Transverse colon (tissue), 4 donors: ENCODE measurements at regions of chr2 and their contacts with region 1.

Region 1: GRCh38 chr2:105369747-105370690 is 28.8 kb downstream of the FHL2 start:
- DNase-seq: peak; percentile 92
- H3K4me3 ChIP-seq: no peak overlapping the region
- H3K27ac ChIP-seq: peak overlapping the region; percentile 35 to 55 (median 44)
- H3K4me1 ChIP-seq: peaks cover 11 to 40% (median 24%) of the 10 kb centered on the region in 4 donors
- H3K27me3 ChIP-seq: no peaks in the 10 kb centered on the region
- CTCF ChIP-seq: peak; percentile 86 to 97 (median 90)
- EP300 ChIP-seq: no peak
- POLR2A ChIP-seq: no peak

Region 2: DNA sequence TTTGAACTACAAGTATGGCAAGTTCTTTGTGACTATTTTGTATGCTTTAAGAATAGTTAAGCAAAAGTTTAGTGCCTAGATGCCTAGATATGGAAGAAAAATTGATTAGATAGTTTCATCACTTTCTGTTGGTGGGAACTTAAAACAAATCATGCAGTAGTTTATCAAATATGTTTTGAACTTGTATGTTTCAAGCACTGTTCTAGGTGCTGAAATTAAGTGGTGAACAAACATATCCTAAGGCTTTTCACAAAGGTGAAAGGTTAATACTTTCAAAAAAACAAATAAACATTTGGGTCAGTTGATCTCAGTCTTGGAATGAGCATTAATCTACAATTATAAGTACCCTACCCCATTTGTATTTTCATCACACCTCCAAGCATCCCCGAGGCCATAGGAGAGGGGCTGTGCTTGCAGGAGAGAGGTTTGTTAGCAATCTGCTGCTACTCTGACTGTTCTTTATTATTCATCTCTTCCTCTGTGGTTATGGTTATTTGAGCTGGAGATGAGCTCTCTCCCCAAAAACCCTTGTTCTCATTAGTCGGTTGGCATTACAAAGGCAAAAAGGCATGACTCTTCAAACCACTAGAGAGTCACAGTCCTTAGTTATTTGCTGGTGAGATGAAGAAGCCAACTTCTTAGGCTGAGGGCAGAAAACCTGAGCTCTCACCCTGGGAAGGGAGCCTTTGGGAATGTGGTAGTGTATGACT is 132.8 kb after region 1 on chr2:
- in situ Hi-C with region 1: loop called in 1 of 4 experiments (anchors 10 kb)
- intact Hi-C with region 1: no loop called
- DNase-seq: no peak
- H3K4me3 ChIP-seq: no peak overlapping the region
- H3K27ac ChIP-seq: no peak overlapping the region
- H3K4me1 ChIP-seq: no peaks in the 10 kb centered on the region
- H3K27me3 ChIP-seq: no peaks in the 10 kb centered on the region
- CTCF ChIP-seq: no peak
- EP300 ChIP-seq: no peak
- POLR2A ChIP-seq: no peak

Region 3: DNA sequence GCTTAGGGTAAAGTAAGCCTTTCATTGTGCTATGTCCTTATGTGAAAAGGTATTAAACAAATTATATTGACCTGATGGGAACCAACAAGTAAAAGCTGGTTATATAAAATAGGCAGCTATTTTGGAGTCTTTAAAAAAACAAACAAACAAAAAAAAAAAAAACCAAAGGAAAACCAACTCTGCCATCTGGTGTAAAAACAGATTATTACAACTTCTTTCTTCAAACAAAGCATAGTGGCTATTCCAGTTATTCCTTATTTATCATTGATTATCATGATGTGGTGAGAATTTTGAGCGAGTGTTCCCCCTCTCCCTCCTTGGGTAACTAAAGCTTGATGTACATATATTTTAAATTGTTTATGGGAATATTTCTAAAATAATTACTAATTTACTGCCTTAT is 151.2 kb after region 1 on chr2:
- in situ Hi-C with region 1: loop called in 3 of 4 experiments (anchors 5 to 10 kb)
- intact Hi-C with region 1: loop called (anchors 2 kb)
- DNase-seq: no peak
- H3K4me3 ChIP-seq: no peak overlapping the region
- H3K27ac ChIP-seq: no peak overlapping the region
- H3K4me1 ChIP-seq: peaks cover 0 to 20% (median 7%) of the 10 kb centered on the region in 4 donors
- H3K27me3 ChIP-seq: no peaks in the 10 kb centered on the region
- CTCF ChIP-seq: peak; percentile 53 to 79 (median 62)
- EP300 ChIP-seq: no peak
- POLR2A ChIP-seq: no peak

Region 4: DNA sequence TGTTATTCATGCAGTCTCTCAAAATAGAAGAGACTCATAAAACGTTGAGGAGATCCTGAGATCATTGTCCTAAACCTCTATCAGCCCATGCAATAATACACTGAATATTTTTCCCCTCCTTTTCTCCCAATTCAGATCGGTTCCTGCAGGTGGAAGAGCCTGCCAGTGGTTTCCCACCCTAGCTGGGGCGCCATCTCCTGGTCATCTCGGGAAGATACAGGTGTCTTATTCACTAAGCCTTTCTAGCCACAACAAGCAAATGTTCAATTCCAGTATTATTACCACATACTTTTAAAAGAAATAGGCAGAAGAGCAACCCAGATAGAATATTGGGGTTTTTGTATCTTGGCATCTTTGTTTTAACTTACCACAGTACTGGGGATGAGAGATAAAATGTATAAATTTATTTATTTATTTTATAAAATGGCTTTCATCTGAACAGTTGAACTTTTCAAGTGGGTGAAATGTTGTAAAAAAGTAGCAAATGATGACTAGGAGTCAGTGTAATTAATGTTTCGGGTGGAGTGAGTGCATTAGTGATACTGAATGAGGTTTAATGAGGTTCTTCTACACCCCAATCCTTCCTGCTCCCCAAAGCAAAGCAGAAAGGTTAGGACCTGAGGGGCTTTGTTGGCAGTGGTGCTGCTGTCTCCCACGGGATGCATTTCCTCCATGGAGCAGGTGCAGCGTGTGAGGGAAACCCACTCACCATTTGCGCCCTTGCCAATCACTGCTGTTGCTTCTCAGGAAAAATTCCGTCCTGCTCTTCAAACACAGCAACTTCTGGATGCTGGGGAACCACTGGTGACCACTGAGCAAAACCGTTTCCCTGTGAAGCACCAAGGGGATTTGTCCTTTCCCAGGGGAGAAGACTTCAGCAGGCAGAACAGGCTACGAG is 176.0 kb after region 1 on chr2:
- in situ Hi-C with region 1: no loop called
- intact Hi-C with region 1: loop called (anchors 1 kb)
- DNase-seq: peak; percentile 76
- H3K4me3 ChIP-seq: no peak overlapping the region
- H3K27ac ChIP-seq: no peak overlapping the region
- H3K4me1 ChIP-seq: no peaks in the 10 kb centered on the region
- H3K27me3 ChIP-seq: no peaks in the 10 kb centered on the region
- CTCF ChIP-seq: peak; percentile 67 to 80 (median 76)
- EP300 ChIP-seq: no peak
- POLR2A ChIP-seq: no peak